ENCODE measurements at regions of chr2 and their contacts with region 1.

Region 1: GRCh38 chr2:26033818-26034636 is at the start of gene RAB10:
- DNase-seq: peak; percentile 99
- ATAC-seq: peak; percentile 95
- H3K4me3 Mint-ChIP-seq: peak within 1 kb of the TSS; percentile 90
- H3K27ac Mint-ChIP-seq: peak within 1 kb of the TSS; percentile 94
- H3K4me1 Mint-ChIP-seq: peaks cover 28% of the 10 kb centered on the region
- H3K27me3 Mint-ChIP-seq: no peaks in the 10 kb centered on the region
- total RNA-seq, gene RAB10: 110 to 115 TPM

Region 2: GRCh38 chr2:26068602-26069298 is 34.7 kb after region 1 on chr2:
- CTCF ChIA-PET with region 1: interaction called, 7 read pairs
- POLR2A ChIA-PET with region 1: interaction called, 15 read pairs
- DNase-seq: peak; percentile 72
- ATAC-seq: peak; percentile 86
- H3K4me3 Mint-ChIP-seq: peak overlapping the region; percentile 33
- H3K27ac Mint-ChIP-seq: peak overlapping the region; percentile 74
- H3K4me1 Mint-ChIP-seq: peaks cover 46% of the 10 kb centered on the region
- H3K27me3 Mint-ChIP-seq: no peaks in the 10 kb centered on the region

Region 3: DNA sequence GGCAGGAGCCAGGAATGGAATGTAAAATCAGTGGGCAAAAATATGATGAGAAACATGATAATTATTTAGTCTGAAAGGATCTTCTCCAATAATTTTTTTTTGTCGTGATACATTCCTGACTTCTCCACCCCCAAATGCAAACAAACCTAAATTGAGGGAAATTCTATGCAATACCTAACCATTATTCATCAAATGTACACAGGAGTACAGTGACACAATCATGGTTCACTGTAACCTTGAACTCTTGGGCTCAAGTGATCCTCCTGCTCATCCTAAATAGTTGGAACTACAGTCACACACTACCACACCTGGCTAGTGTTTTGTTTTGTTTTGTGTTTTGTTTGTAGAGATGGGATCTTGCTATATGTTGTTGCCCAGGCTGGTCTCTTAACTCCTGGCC is 46.3 kb after region 1 on chr2:
- CTCF ChIA-PET with region 1: no interaction called
- POLR2A ChIA-PET with region 1: no interaction called
- DNase-seq: no peak
- ATAC-seq: no peak
- H3K4me3 Mint-ChIP-seq: no peak overlapping the region
- H3K27ac Mint-ChIP-seq: no peak overlapping the region
- H3K4me1 Mint-ChIP-seq: peaks cover 11% of the 10 kb centered on the region
- H3K27me3 Mint-ChIP-seq: no peaks in the 10 kb centered on the region